ENCODE measurements at regions of chr11 and their contacts with region 1.

Region 1: DNA sequence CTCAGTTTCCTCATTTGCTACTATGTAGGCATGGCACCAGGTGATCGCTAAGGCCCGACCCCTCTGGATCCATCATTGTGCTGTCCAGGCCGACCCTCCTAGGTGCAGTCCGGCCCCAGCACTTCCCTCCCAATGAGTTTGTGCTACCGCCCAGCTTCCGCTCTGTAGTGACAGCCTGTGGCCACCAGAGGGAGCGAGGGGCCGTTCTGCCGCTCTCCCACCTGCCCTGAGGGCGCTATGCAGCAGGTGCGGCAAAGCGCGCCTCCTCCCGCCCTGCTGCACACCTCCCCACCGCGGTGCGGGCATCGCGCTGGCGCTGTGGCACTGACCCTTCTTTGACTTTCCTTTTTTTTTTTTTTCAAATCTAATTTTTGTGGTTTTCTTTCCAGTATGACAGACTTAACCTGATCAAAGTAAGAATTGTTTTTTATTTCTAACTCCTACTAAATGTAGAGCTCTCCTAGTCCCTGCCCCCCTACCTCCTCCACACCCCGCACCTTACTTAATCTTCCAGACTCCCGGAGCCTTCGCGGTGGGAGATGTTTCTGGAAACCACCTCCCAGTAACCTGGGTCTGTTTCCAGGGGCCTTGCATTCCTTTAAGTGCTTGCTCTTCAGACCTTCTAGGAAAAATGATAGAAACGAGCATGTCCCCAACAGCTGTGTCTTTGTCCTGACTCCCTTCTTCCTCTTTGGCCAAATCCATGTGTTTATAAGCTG is 73.7 kb downstream of the SCN3B start:
- DNase-seq: peak; percentile 56 to 73
- H3K4me3 ChIP-seq: no peak overlapping the region
- H3K27ac ChIP-seq: no peak overlapping the region
- H3K4me1 ChIP-seq: no peaks in the 10 kb centered on the region
- H3K27me3 ChIP-seq: no peaks in the 10 kb centered on the region
- CTCF ChIP-seq: peak; percentile 93

Region 2: GRCh38 chr11:123301696-123302400 is 278.9 kb before region 1 on chr11:
- CTCF ChIA-PET with region 1: no interaction called
- POLR2A ChIA-PET with region 1: no interaction called
- intact Hi-C with region 1: loop called (anchors 10 kb)
- DNase-seq: peak in 1 of 2 experiments; percentile 58
- H3K4me3 ChIP-seq: peak overlapping the region; percentile 49
- H3K27ac ChIP-seq: no peak overlapping the region
- H3K4me1 ChIP-seq: peaks cover 23% of the 10 kb centered on the region
- H3K27me3 ChIP-seq: no peaks in the 10 kb centered on the region
- CTCF ChIP-seq: peak; percentile 78

Region 3: DNA sequence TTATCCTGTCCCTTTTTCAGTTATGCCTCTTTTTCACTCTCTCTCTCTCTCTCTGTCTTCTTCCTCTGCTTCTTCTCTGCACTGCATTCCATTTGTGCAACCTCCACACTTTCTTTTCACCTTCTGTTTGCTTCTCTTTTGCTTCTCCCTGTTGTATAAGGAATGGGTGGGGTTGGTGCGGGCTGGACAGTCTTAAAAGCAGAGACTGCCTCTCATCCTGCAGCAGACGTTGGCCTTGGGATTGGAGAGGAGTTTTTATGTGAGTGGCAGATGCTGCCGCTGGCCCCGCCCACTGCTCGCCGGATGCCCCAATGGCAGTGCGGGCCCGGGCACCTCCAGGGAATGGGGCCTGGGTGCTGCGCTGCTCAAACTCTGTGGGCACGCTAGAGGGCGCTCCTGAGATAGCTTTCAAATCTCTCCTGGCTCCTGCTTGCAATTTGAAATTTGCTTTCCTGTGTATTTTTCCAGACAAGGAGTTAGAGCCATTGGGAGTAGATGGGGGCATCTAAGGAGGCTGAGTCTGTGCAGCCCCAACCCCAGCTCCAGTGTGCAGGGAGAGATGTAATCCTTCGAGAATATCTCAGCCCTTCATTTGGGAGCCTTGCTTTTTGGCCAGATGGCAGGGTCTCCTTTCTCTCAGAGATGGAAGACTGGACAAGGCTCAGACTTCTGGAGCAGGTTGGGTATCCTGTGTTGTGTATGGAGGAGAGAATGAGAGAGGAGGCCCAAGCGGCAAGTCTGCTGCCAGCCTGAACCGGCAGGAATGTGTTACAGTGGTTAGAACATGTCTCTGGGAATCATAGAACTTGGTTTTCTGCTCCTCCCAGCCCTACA is 69.5 kb before region 1 on chr11:
- CTCF ChIA-PET with region 1: interaction called, 3 read pairs
- POLR2A ChIA-PET with region 1: no interaction called
- intact Hi-C with region 1: loop called (anchors 1 kb)
- DNase-seq: peak; percentile 68 to 84
- H3K4me3 ChIP-seq: no peak overlapping the region
- H3K27ac ChIP-seq: no peak overlapping the region
- H3K4me1 ChIP-seq: no peaks in the 10 kb centered on the region
- H3K27me3 ChIP-seq: no peaks in the 10 kb centered on the region
- CTCF ChIP-seq: peak; percentile 94

Region 4: GRCh38 chr11:123536690-123537437 is 43.9 kb before region 1 on chr11:
- CTCF ChIA-PET with region 1: no interaction called
- POLR2A ChIA-PET with region 1: no interaction called
- intact Hi-C with region 1: no loop called
- DNase-seq: no peak
- H3K4me3 ChIP-seq: no peak overlapping the region
- H3K27ac ChIP-seq: peak overlapping the region; percentile 36
- H3K4me1 ChIP-seq: peaks cover 30% of the 10 kb centered on the region
- H3K27me3 ChIP-seq: no peaks in the 10 kb centered on the region
- CTCF ChIP-seq: no peak

Region 5: GRCh38 chr11:123654566-123655081 is 73.9 kb after region 1 on chr11 and contains the start of gene SCN3B:
- CTCF ChIA-PET with region 1: interaction called, 10 read pairs
- POLR2A ChIA-PET with region 1: no interaction called
- intact Hi-C with region 1: no loop called
- DNase-seq: peak in 1 of 2 experiments; percentile 57
- H3K4me3 ChIP-seq: peak within 1 kb of the TSS; percentile 57; the same call in 1 of the 2 replicates
- H3K27ac ChIP-seq: no peak within 1 kb of the TSS
- H3K4me1 ChIP-seq: no peaks in the 10 kb centered on the region
- H3K27me3 ChIP-seq: peaks cover 83% of the 10 kb centered on the region
- CTCF ChIP-seq: no peak
- total RNA-seq, gene SCN3B: not detected in 2 replicates